ENCODE measurements at regions of chr10 and their contacts with region 1.

Region 1: GRCh38 chr10:117174439-117175214 is 22.7 kb upstream of the KCNK18 start:
- DNase-seq: peak; percentile 83
- H3K4me3 Mint-ChIP-seq: peak overlapping the region; percentile 78
- H3K27ac Mint-ChIP-seq: no peak overlapping the region
- H3K4me1 Mint-ChIP-seq: peaks cover 19% of the 10 kb centered on the region
- H3K27me3 Mint-ChIP-seq: peaks cover 38% of the 10 kb centered on the region

Region 2: GRCh38 chr10:116787893-116788665 is 386.5 kb before region 1 on chr10:
- CTCF ChIA-PET with region 1: interaction called, 42 read pairs
- POLR2A ChIA-PET with region 1: no interaction called
- DNase-seq: peak; percentile 79
- H3K4me3 Mint-ChIP-seq: peak overlapping the region; percentile 44
- H3K27ac Mint-ChIP-seq: no peak overlapping the region
- H3K4me1 Mint-ChIP-seq: peaks cover 16% of the 10 kb centered on the region
- H3K27me3 Mint-ChIP-seq: peaks cover 3% of the 10 kb centered on the region

Region 3: GRCh38 chr10:116796910-116797513 is 377.6 kb before region 1 on chr10:
- CTCF ChIA-PET with region 1: interaction called, 94 read pairs
- POLR2A ChIA-PET with region 1: interaction called, 7 read pairs
- DNase-seq: peak; percentile 69
- H3K4me3 Mint-ChIP-seq: no peak overlapping the region
- H3K27ac Mint-ChIP-seq: no peak overlapping the region
- H3K4me1 Mint-ChIP-seq: peaks cover 3% of the 10 kb centered on the region
- H3K27me3 Mint-ChIP-seq: peaks cover 13% of the 10 kb centered on the region

Region 4: GRCh38 chr10:117186832-117187615 is 12.4 kb after region 1 on chr10:
- CTCF ChIA-PET with region 1: interaction called, 26 read pairs
- POLR2A ChIA-PET with region 1: no interaction called
- DNase-seq: no peak
- H3K4me3 Mint-ChIP-seq: no peak overlapping the region
- H3K27ac Mint-ChIP-seq: no peak overlapping the region
- H3K4me1 Mint-ChIP-seq: no peaks in the 10 kb centered on the region
- H3K27me3 Mint-ChIP-seq: no peaks in the 10 kb centered on the region

Measured in activated CD4-positive, alpha-beta memory T cell treated with anti-CD3 and anti-CD28 coated beads, Interleukin-2, amount 10 ng/mL, durations not matched to agents 7 days and 5 days (primary cell).